ENCODE measurements at regions of chr6 and their contacts with region 1.

Region 1: DNA sequence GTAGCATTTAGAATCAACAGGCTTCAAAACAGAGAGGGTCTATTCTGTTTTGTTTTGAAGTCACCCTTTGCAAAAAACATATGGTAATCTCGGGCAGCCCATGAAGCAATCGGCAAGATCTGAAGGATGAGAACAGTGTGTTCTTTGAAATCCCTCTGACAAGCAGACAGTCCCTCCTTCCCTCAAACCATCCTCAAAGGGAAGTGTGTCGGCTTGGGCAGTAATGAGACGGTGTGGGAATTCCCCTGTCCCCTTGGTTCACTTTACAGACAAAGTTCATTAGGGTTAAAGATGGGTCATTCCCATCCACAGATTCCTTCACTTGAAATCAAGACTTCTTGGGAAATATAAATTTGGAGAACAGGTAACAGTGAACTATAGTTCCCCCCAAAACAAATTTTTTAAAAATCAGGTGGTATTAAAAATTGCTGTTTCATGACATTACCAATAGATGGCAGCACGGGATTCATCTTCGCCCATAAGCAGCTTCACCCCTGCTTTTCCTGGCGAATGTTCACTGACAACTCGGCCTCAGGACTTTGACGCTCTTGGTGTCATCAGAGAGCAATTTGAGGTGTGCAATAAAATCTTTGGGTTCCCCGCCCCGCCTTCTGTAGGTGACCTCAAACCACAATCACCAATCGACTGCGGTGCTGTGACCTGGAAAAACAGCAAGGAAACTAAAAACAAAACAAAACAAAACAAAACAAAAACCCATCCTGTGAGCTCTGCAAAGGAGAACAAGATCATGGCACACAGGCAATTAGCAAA is 159.3 kb upstream of the TNFAIP3 start:
- DNase-seq: peak in 1 of 2 donors; percentile 67
- H3K4me3 ChIP-seq: peak overlapping the region in 1 of 3 donors; percentile 51
- H3K27ac ChIP-seq: no peak overlapping the region
- H3K4me1 ChIP-seq: no peaks in the 10 kb centered on the region
- H3K27me3 ChIP-seq: no peaks in the 10 kb centered on the region
- CTCF ChIP-seq: peak; percentile 72 to 76 (median 74)
- POLR2A ChIP-seq: no peak

Region 2: GRCh38 chr6:137944793-137945498 is 237.2 kb after region 1 on chr6:
- intact Hi-C with region 1: loop called (anchors 10 kb)
- DNase-seq: no peak
- H3K4me3 ChIP-seq: no peak overlapping the region
- H3K27ac ChIP-seq: no peak overlapping the region
- H3K4me1 ChIP-seq: no peaks in the 10 kb centered on the region
- H3K27me3 ChIP-seq: no peaks in the 10 kb centered on the region
- CTCF ChIP-seq: peak; percentile 63 to 82 (median 79)
- POLR2A ChIP-seq: no peak

Measured in breast epithelium (tissue), 4 donors.